Calu3 (cell line): ENCODE measurements at regions of chr9 and their contacts with region 1.

Region 1: GRCh38 chr9:104747558-104748358 is at the start of gene NIPSNAP3A:
- DNase-seq: peak; percentile 76
- H3K4me3 Mint-ChIP-seq: peak within 1 kb of the TSS; percentile 95
- H3K27ac Mint-ChIP-seq: peak within 1 kb of the TSS; percentile 90
- H3K4me1 Mint-ChIP-seq: peaks cover 17% of the 10 kb centered on the region
- H3K27me3 Mint-ChIP-seq: no peaks in the 10 kb centered on the region
- CTCF ChIP-seq: no peak
- total RNA-seq, gene NIPSNAP3A: 7.4 and 8.0 TPM in 2 replicates

Region 2: GRCh38 chr9:103397868-103398600 is 1349.7 kb before region 1 on chr9:
- CTCF ChIA-PET with region 1: no interaction called
- intact Hi-C with region 1: loop called (anchors 10 kb)
- DNase-seq: peak; percentile 56
- H3K4me3 Mint-ChIP-seq: no peak overlapping the region
- H3K27ac Mint-ChIP-seq: no peak overlapping the region
- H3K4me1 Mint-ChIP-seq: no peaks in the 10 kb centered on the region
- H3K27me3 Mint-ChIP-seq: no peaks in the 10 kb centered on the region
- CTCF ChIP-seq: peak; percentile 56

Region 3: DNA sequence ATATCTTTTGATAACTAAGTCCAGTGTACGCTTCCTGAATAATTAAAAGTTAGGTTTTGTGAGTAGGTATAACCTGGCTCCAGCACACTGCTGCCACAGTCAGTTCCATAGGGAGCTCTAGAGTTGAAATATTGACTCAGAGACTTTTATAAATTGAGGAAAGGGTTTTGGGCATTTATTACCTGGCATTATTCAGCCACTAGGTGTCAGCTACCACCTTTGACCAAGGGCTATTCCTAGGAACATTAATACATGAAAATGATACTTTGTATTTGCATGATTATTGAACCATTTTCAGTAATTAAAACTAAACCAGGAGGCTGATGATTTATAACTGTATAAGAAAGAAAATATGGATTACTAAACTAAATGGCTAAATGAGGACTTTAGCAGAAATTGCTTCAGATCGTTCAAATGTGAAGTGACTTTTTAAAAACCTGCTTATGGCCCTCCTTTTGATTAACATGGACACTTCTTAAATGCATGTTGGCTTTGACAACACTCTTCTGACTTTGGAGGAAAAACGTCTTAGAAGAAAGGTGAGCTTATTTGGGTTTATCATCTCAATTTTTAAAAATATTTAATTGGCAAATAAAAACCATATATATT is 570.7 kb before region 1 on chr9:
- CTCF ChIA-PET with region 1: no interaction called
- intact Hi-C with region 1: loop called (anchors 2 kb)
- DNase-seq: no peak
- H3K4me3 Mint-ChIP-seq: no peak overlapping the region
- H3K27ac Mint-ChIP-seq: no peak overlapping the region
- H3K4me1 Mint-ChIP-seq: no peaks in the 10 kb centered on the region
- H3K27me3 Mint-ChIP-seq: no peaks in the 10 kb centered on the region
- CTCF ChIP-seq: no peak

Region 4: GRCh38 chr9:104386425-104387069 is 361.2 kb before region 1 on chr9:
- CTCF ChIA-PET with region 1: no interaction called
- intact Hi-C with region 1: loop called (anchors 5 kb)
- DNase-seq: no peak
- H3K4me3 Mint-ChIP-seq: no peak overlapping the region
- H3K27ac Mint-ChIP-seq: no peak overlapping the region
- H3K4me1 Mint-ChIP-seq: no peaks in the 10 kb centered on the region
- H3K27me3 Mint-ChIP-seq: no peaks in the 10 kb centered on the region
- CTCF ChIP-seq: no peak

Region 5: GRCh38 chr9:104608336-104608735 is 139.4 kb before region 1 on chr9:
- CTCF ChIA-PET with region 1: no interaction called
- intact Hi-C with region 1: loop called (anchors 10 kb)
- DNase-seq: no peak
- H3K4me3 Mint-ChIP-seq: no peak overlapping the region
- H3K27ac Mint-ChIP-seq: no peak overlapping the region
- H3K4me1 Mint-ChIP-seq: no peaks in the 10 kb centered on the region
- H3K27me3 Mint-ChIP-seq: no peaks in the 10 kb centered on the region
- CTCF ChIP-seq: no peak

Region 6: GRCh38 chr9:104711604-104712003 is 36.2 kb before region 1 on chr9:
- CTCF ChIA-PET with region 1: no interaction called
- intact Hi-C with region 1: no loop called
- DNase-seq: no peak
- H3K4me3 Mint-ChIP-seq: no peak overlapping the region
- H3K27ac Mint-ChIP-seq: no peak overlapping the region
- H3K4me1 Mint-ChIP-seq: no peaks in the 10 kb centered on the region
- H3K27me3 Mint-ChIP-seq: no peaks in the 10 kb centered on the region
- CTCF ChIP-seq: no peak

Region 7: GRCh38 chr9:104725014-104725413 is 22.7 kb before region 1 on chr9:
- CTCF ChIA-PET with region 1: no interaction called
- intact Hi-C with region 1: no loop called
- DNase-seq: no peak
- H3K4me3 Mint-ChIP-seq: no peak overlapping the region
- H3K27ac Mint-ChIP-seq: no peak overlapping the region
- H3K4me1 Mint-ChIP-seq: no peaks in the 10 kb centered on the region
- H3K27me3 Mint-ChIP-seq: no peaks in the 10 kb centered on the region
- CTCF ChIP-seq: no peak